ENCODE measurements at regions of chr4 and their contacts with region 1.

Region 1: GRCh38 chr4:164012396-164013027 is 518.0 kb downstream of the TMA16 start:
- DNase-seq: peak; percentile 28
- ATAC-seq: peak; percentile 98
- H3K4me3 ChIP-seq: no peak overlapping the region
- H3K27ac ChIP-seq: no peak overlapping the region
- H3K4me1 ChIP-seq: no peaks in the 10 kb centered on the region
- H3K27me3 ChIP-seq: no peaks in the 10 kb centered on the region
- CTCF ChIP-seq: peak; percentile 75
- EP300 ChIP-seq: no peak
- POLR2A ChIP-seq: no peak
- RAD21 ChIP-seq: peak; percentile 42; the same call in 1 of the 2 replicates

Region 2: GRCh38 chr4:163484906-163485305 is 527.6 kb before region 1 on chr4:
- CTCF ChIA-PET with region 1: no interaction called
- POLR2A ChIA-PET with region 1: no interaction called
- in situ Hi-C with region 1: no loop called
- intact Hi-C with region 1: loop called (anchors 2 kb)
- DNase-seq: peak; percentile 41
- ATAC-seq: peak; percentile 81
- H3K4me3 ChIP-seq: no peak overlapping the region
- H3K27ac ChIP-seq: no peak overlapping the region
- H3K4me1 ChIP-seq: no peaks in the 10 kb centered on the region
- H3K27me3 ChIP-seq: no peaks in the 10 kb centered on the region
- CTCF ChIP-seq: peak; percentile 76
- EP300 ChIP-seq: no peak
- POLR2A ChIP-seq: no peak
- RAD21 ChIP-seq: peak; percentile 50; the same call in 1 of the 2 replicates

Region 3: DNA sequence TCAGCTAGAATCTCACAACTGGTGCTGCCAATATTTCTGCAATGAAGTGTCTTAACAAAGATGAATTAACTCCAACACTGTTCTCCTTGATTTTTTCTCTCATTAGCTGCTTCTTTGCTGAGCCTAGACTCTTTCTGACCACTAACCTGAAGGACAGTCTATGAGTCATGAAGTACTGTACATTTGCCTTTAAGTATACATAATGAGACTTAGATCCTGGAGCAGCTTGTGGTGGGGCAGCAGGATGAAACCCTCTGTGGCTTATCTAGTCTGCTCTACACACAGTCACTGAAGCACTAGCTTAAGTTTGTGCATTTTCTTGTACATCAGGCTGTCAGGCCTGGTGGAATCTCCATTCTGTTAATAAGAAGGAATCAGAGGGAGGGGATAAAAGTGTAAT is 434.0 kb after region 1 on chr4:
- CTCF ChIA-PET with region 1: no interaction called
- POLR2A ChIA-PET with region 1: no interaction called
- in situ Hi-C with region 1: no loop called
- intact Hi-C with region 1: no loop called
- DNase-seq: no peak
- ATAC-seq: no peak
- H3K4me3 ChIP-seq: no peak overlapping the region
- H3K27ac ChIP-seq: no peak overlapping the region
- H3K4me1 ChIP-seq: no peaks in the 10 kb centered on the region
- H3K27me3 ChIP-seq: no peaks in the 10 kb centered on the region
- CTCF ChIP-seq: no peak
- EP300 ChIP-seq: no peak
- POLR2A ChIP-seq: no peak
- RAD21 ChIP-seq: no peak